KBM-7 (cell line): ENCODE measurements at regions of chr5 and their contacts with region 1.

Region 1: GRCh38 chr5:32092938-32093812 is 80.9 kb downstream of the GOLPH3 start:
- DNase-seq: peak; percentile 74

Region 2: GRCh38 chr5:31573494-31574142 is 519.6 kb before region 1 on chr5:
- in situ Hi-C with region 1: loop called (anchors 25 kb)
- DNase-seq: no peak

Region 3: GRCh38 chr5:31617867-31618266 is 475.3 kb before region 1 on chr5:
- in situ Hi-C with region 1: no loop called
- DNase-seq: no peak